ENCODE measurements at regions of chr17 and their contacts with region 1.

Region 1: DNA sequence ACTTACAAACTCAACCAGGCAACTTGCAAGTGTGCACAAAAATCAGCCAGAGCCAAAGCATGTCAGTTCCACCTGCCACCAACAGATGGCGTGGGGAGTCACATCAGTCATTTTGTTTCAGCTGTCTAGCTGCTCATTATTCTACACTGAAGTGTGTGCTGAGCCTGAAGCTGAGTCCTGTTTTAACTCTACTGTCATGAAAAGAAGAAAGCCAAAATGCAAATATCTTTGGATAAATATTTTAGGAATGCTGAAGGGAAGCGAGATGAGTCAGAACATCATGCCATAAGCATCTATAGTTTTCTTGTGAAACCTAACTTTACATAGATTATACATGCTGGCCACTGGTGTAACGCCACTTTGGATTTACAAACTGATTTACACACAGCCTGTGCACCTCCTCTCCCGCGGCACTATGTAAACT is 172.6 kb downstream of the CDK5R1 start:
- DNase-seq: peak; percentile 86
- H3K4me3 Mint-ChIP-seq: no peak overlapping the region
- H3K27ac Mint-ChIP-seq: no peak overlapping the region
- H3K4me1 Mint-ChIP-seq: no peaks in the 10 kb centered on the region
- H3K27me3 Mint-ChIP-seq: no peaks in the 10 kb centered on the region

Region 2: GRCh38 chr17:32461853-32462617 is 197.4 kb before region 1 on chr17:
- CTCF ChIA-PET with region 1: interaction called, 10 read pairs
- intact Hi-C with region 1: no loop called
- DNase-seq: peak; percentile 83
- H3K4me3 Mint-ChIP-seq: no peak overlapping the region
- H3K27ac Mint-ChIP-seq: peak overlapping the region; percentile 72
- H3K4me1 Mint-ChIP-seq: peaks cover 37% of the 10 kb centered on the region
- H3K27me3 Mint-ChIP-seq: no peaks in the 10 kb centered on the region

Region 3: GRCh38 chr17:32701871-32702270 is 42.4 kb after region 1 on chr17:
- CTCF ChIA-PET with region 1: interaction called, 4 read pairs
- intact Hi-C with region 1: loop called (anchors 1 kb)
- DNase-seq: no peak
- H3K4me3 Mint-ChIP-seq: no peak overlapping the region
- H3K27ac Mint-ChIP-seq: no peak overlapping the region
- H3K4me1 Mint-ChIP-seq: peaks cover 3% of the 10 kb centered on the region
- H3K27me3 Mint-ChIP-seq: no peaks in the 10 kb centered on the region

Region 4: GRCh38 chr17:32936894-32937500 is 277.6 kb after region 1 on chr17:
- CTCF ChIA-PET with region 1: no interaction called
- intact Hi-C with region 1: loop called (anchors 10 kb)
- DNase-seq: peak; percentile 76
- H3K4me3 Mint-ChIP-seq: no peak overlapping the region
- H3K27ac Mint-ChIP-seq: no peak overlapping the region
- H3K4me1 Mint-ChIP-seq: no peaks in the 10 kb centered on the region
- H3K27me3 Mint-ChIP-seq: peaks cover 16% of the 10 kb centered on the region